Sigmoid colon (tissue), 7 donors: ENCODE measurements at regions of chr19 and their contacts with region 1.

Region 1: GRCh38 chr19:9796113-9796773 is 22.6 kb downstream of the FBXL12 start:
- DNase-seq: peak; percentile 88
- H3K4me3 ChIP-seq: no peak overlapping the region
- H3K27ac ChIP-seq: peak overlapping the region in 1 of 4 donors; percentile 24
- H3K4me1 ChIP-seq: peaks cover 0 to 7% (median 5%) of the 10 kb centered on the region in 4 donors
- H3K27me3 ChIP-seq: no peaks in the 10 kb centered on the region
- CTCF ChIP-seq: peak; percentile 70 to 82 (median 72)
- EP300 ChIP-seq: no peak
- POLR2A ChIP-seq: no peak

Region 2: GRCh38 chr19:9140159-9140874 is 655.9 kb before region 1 on chr19 and contains the start of gene ZNF317:
- intact Hi-C with region 1: loop called (anchors 5 kb)
- DNase-seq: peak; percentile 96
- H3K4me3 ChIP-seq: peak within 1 kb of the TSS; percentile 74 to 94 (median 84)
- H3K27ac ChIP-seq: peak within 1 kb of the TSS; percentile 85 to 93 (median 92)
- H3K4me1 ChIP-seq: peaks cover 0 to 28% (median 14%) of the 10 kb centered on the region in 4 donors
- H3K27me3 ChIP-seq: no peaks in the 10 kb centered on the region
- CTCF ChIP-seq: no peak
- EP300 ChIP-seq: no peak
- POLR2A ChIP-seq: peak in 1 of 2 donors; percentile 57
- total RNA-seq, gene ZNF317: 11.4 to 20.8 (median 17.4) TPM

Region 3: GRCh38 chr19:9309139-9309973 is 486.9 kb before region 1 on chr19 and contains the start of gene ZNF699:
- intact Hi-C with region 1: loop called (anchors 2 kb)
- DNase-seq: peak; percentile 99
- H3K4me3 ChIP-seq: peak within 1 kb of the TSS; percentile 68 to 94 (median 84)
- H3K27ac ChIP-seq: peak within 1 kb of the TSS; percentile 91 to 98 (median 96)
- H3K4me1 ChIP-seq: peaks cover 0 to 21% (median 13%) of the 10 kb centered on the region in 4 donors
- H3K27me3 ChIP-seq: no peaks in the 10 kb centered on the region
- CTCF ChIP-seq: no peak
- EP300 ChIP-seq: peak in 1 of 4 donors; percentile 4
- POLR2A ChIP-seq: peak; percentile 33 to 63
- total RNA-seq, gene ZNF699: 3.1 to 23.7 (median 11.9) TPM

Region 4: DNA sequence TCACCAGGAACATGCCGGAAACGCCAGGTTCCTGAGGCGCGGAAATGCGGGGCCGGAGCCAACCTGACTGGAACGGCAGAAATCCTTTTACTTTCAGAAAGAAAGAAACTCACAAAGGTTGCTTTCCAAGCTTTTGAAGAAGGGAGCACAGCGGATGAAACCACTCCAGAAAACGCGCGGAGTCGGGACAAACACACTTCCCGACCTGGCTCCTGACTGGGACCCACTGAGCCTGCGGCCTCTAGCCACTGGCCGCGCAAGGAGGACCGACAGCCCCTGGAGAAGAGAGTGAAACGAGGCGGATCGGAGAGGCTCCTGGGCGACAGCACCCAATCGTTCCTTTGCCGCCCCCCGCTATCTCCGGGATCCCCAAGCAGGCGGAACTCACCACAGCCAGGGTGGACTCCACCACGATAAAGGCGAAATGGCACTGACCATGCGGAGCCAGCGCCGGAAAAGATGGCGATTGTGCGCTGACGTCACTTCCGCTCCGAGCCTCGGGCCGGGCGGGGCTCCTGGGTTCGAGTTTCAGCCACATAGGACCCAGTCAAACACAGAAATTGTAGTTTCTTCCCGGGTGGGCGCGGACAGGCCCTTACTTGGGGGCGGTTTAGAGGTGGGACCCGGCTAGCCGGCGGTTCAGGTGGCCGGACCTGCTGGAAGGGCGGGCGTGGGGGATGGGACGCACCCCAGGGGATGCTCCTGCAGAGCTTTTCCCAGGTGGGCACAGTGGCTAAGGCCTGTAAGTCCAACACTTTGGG is 212.0 kb before region 1 on chr19 and contains the start of gene ZNF121:
- intact Hi-C with region 1: loop called (anchors 5 kb)
- DNase-seq: peak; percentile 89
- H3K4me3 ChIP-seq: peak within 1 kb of the TSS; percentile 68 to 76 (median 70)
- H3K27ac ChIP-seq: peak within 1 kb of the TSS; percentile 88 to 92 (median 90)
- H3K4me1 ChIP-seq: peaks cover 0 to 22% (median 17%) of the 10 kb centered on the region in 4 donors
- H3K27me3 ChIP-seq: peaks cover 0 to 5% (median 0%) of the 10 kb centered on the region in 3 donors
- CTCF ChIP-seq: no peak
- EP300 ChIP-seq: no peak
- POLR2A ChIP-seq: peak in 1 of 2 donors; percentile 34
- total RNA-seq, gene ZNF121: 18.3 to 28.6 (median 23.7) TPM

Region 5: GRCh38 chr19:9674663-9675357 is 121.4 kb before region 1 on chr19 and contains the start of gene ZNF562:
- intact Hi-C with region 1: loop called (anchors 2 kb)
- DNase-seq: peak; percentile 92
- H3K4me3 ChIP-seq: peak within 1 kb of the TSS; percentile 63 to 68 (median 66)
- H3K27ac ChIP-seq: peak within 1 kb of the TSS; percentile 91 to 95 (median 93)
- H3K4me1 ChIP-seq: peaks cover 0 to 16% (median 6%) of the 10 kb centered on the region in 4 donors
- H3K27me3 ChIP-seq: no peaks in the 10 kb centered on the region
- CTCF ChIP-seq: no peak
- EP300 ChIP-seq: no peak
- POLR2A ChIP-seq: peak; percentile 36 to 56
- total RNA-seq, gene ZNF562: 21.3 to 45.4 (median 32.4) TPM

Region 6: DNA sequence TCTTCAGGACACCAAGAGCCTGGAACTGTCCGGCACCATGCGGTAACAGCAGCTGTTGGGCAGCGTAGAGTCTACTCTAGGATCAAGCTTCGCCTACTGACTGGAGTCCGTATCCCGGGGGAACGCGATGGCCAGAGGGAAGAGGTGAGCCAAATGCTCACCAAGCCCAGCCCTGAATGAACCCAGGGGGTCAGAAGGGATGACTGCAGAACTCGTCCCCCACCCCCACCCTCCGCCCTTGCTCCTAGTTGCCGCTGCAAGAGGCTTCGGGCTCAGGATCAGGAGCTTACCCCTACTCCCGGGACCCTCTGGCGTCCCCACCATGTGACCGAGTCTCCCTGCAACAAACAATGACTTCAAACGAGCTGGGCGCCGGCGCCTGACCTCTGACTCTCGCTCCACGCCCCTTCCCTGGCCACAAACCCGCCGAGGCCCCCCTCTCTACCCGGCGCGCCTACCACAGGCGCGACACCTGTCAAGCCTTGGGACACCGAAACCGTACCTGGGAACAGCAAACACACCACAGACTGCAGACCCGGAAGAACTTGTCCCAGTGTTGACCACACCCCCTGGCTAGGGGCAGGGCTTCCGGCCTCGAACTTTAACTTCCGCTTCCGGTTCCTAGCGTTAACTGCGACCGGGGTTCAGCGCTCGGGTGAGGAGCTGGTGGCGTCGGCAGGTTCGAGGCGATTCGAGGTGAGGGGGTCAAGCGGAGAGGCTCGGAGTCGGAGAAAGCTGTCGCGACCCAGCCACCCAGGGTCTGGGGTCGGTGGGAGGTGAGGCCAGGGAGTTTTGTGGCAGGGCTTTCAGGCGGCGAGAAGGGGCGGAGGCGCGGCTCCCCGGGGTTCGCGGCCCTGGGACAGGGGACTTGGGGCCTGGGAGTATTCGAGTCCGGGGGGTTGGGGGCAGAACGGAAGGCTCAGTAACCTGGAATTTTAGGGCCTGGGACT is 31.3 kb after region 1 on chr19 and contains the start of gene UBL5:
- intact Hi-C with region 1: no loop called
- DNase-seq: peak; percentile 94
- H3K4me3 ChIP-seq: peak within 1 kb of the TSS; percentile 73 to 98 (median 90)
- H3K27ac ChIP-seq: peak within 1 kb of the TSS; percentile 78 to 89 (median 84)
- H3K4me1 ChIP-seq: peaks cover 0 to 31% (median 25%) of the 10 kb centered on the region in 4 donors
- H3K27me3 ChIP-seq: no peaks in the 10 kb centered on the region
- CTCF ChIP-seq: no peak
- EP300 ChIP-seq: no peak
- POLR2A ChIP-seq: peak; percentile 87 to 89
- total RNA-seq, gene UBL5: 518 to 900 (median 674) TPM